Activated T-helper 1 cell treated with anti-CD3 and anti-CD28 coated beads, Interleukin-12 subunit alpha, Interleukin-12 subunit beta, Interleukin-2, Interleukin-4 antibody, amounts not matched to agents 30 ng/mL and 10 ng/mL and 1 ng/mL, durations not matched to agents 14 hours and 24 hours and 36 hours (primary cell): ENCODE measurements at regions of chr1 and their contacts with region 1.

Region 1: DNA sequence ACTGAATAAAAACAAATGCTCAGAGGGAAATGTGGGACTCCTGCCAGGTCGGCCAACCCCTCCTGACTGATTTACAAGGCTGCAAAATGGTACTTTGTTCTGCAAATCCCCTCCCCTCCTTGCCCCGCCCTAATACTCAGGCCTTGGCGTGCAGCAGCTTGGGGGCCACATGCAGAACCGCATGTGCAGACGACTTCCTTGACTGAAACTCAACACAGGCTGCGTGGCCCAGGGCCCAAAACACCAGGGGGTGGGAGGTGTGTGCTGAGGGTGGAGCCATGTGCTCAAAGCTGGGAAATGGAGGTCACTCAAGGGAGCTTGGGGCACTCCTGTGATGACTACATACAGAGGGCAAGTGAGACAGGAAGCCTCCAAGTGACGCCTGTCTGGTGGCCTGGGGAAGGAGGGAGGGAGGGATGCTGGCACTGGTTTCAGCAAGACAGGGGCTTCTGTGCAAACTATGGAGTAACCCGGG is 87.2 kb downstream of the MRPL37 start:
- DNase-seq: peak; percentile 79
- H3K4me3 Mint-ChIP-seq: peak overlapping the region; percentile 81
- H3K27ac Mint-ChIP-seq: peak overlapping the region; percentile 98
- H3K4me1 Mint-ChIP-seq: peaks cover 89% of the 10 kb centered on the region
- H3K27me3 Mint-ChIP-seq: no peaks in the 10 kb centered on the region

Region 2: GRCh38 chr1:54230507-54231339 is 56.5 kb before region 1 on chr1:
- intact Hi-C with region 1: loop called (anchors 1 kb)
- DNase-seq: no peak
- H3K4me3 Mint-ChIP-seq: no peak overlapping the region
- H3K27ac Mint-ChIP-seq: peak overlapping the region; percentile 86
- H3K4me1 Mint-ChIP-seq: peaks cover 27% of the 10 kb centered on the region
- H3K27me3 Mint-ChIP-seq: no peaks in the 10 kb centered on the region

Region 3: GRCh38 chr1:54255026-54255702 is 32.0 kb before region 1 on chr1:
- intact Hi-C with region 1: no loop called
- DNase-seq: no peak
- H3K4me3 Mint-ChIP-seq: no peak overlapping the region
- H3K27ac Mint-ChIP-seq: no peak overlapping the region
- H3K4me1 Mint-ChIP-seq: peaks cover 5% of the 10 kb centered on the region
- H3K27me3 Mint-ChIP-seq: no peaks in the 10 kb centered on the region

Region 4: DNA sequence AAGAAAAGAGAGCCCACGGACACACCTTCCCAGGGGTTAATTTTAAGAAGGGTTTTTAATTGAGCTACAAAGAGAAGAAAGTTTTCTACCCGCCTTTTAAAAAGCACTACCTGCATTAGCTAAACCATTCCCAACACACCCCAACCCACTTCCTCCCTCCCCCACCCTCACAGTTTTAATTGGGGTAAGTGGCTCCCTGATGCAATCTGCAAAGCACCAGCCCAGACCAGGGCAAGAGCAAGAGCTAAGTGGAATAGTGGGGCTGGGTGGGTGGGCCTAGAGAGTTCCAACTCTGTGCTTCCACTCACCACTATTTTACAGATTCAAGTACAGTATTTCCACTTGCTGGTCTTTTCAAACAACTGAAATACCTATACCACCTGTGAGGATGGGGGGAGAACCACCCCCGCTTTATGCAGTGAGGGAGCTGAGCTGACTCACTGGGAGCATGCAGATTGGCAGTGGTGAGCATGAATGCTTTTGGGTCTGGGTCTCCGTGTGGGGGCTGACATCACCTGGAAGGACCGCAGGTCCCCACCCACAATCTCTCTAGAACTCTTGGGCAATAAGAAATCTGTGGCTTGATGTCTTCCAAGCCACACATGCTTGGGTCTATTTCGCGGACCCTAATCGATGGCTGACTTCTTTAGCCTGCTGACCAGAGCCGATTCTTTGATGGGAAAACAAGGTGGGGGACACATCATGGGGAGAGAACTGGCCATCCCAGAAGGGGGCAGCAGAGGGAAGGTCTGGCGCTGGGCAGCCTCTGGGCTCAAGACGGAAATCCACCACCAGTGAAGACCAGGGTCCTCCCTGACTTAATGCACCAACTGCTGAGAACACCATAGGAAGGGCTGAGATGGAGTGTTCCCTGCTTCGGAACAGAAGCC is 23.5 kb after region 1 on chr1:
- intact Hi-C with region 1: loop called (anchors 1 kb)
- DNase-seq: no peak
- H3K4me3 Mint-ChIP-seq: peak overlapping the region; percentile 30
- H3K27ac Mint-ChIP-seq: peak overlapping the region; percentile 77
- H3K4me1 Mint-ChIP-seq: peaks cover 61% of the 10 kb centered on the region
- H3K27me3 Mint-ChIP-seq: no peaks in the 10 kb centered on the region

Region 5: DNA sequence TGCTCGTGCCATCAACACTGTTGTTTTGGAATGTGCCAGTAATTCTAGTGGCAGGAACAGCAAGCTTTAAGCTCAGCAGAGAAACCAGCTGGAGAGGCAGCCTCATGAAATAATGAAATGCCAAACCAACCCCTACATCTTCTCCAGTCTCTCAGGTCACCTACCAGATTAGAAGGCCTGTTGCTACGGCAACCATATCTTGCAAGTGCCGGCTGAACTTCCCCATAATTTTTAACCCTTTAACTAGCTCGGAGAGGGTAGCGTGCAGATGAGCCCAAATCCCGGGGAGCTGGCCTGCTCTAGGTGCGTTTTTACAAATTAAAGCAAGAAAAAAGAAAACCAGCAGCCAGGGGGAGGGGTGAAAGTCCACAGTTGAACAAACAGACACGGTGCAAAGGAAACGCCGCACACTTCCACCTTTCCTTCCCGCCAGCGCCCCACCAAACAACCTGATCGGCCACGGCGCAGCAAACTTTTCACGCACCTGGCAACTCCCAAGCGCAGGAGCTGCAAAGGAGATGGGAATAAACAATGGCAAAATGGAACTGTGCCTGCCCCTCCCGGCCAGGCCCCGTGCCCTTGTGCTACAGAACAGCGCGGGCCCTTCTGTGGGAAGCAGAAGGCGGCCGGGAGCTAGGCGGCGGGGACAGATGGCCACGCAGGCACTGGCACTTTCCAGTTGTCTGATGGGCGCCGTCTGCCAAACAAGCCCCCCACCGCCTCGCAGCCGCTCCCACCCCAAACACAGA is 68.9 kb after region 1 on chr1:
- intact Hi-C with region 1: loop called (anchors 1 kb)
- DNase-seq: no peak
- H3K4me3 Mint-ChIP-seq: peak overlapping the region; percentile 87
- H3K27ac Mint-ChIP-seq: peak overlapping the region; percentile 94
- H3K4me1 Mint-ChIP-seq: peaks cover 91% of the 10 kb centered on the region
- H3K27me3 Mint-ChIP-seq: no peaks in the 10 kb centered on the region

Region 6: DNA sequence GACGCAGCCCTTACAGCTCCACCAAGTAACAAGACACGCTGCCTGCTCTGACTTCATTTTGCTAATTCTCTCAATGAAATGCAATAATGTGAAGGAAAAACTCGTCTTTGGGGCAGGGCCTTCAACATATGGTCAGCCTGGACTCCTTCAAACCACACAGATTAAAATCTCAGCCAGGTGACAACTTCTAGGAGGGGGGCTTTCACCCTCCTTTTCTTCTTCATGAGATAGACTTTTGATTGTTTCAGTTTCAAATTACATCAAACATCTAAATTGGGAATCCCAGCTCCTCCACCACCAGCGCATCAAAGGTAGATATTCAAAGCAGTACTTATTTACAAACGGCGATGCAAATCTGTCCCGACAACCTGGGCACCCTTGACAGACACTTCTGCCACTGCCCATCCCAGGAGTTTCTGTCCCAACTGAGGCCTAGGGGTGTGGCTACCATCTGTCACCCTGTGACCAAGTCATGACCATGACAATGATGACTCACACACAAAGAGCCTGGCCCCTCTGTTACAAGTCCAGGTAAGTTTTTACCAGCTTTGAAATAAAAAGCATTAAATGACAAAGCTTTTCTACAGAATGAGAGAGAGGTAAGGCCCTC is 89.3 kb after region 1 on chr1:
- intact Hi-C with region 1: loop called (anchors 2 kb)
- DNase-seq: peak; percentile 7
- H3K4me3 Mint-ChIP-seq: no peak overlapping the region
- H3K27ac Mint-ChIP-seq: peak overlapping the region; percentile 67
- H3K4me1 Mint-ChIP-seq: peaks cover 77% of the 10 kb centered on the region
- H3K27me3 Mint-ChIP-seq: no peaks in the 10 kb centered on the region

Region 7: GRCh38 chr1:54400329-54400728 is 113.1 kb after region 1 on chr1:
- intact Hi-C with region 1: loop called (anchors 1 kb)
- DNase-seq: no peak
- H3K4me3 Mint-ChIP-seq: peak overlapping the region; percentile 68
- H3K27ac Mint-ChIP-seq: peak overlapping the region; percentile 88
- H3K4me1 Mint-ChIP-seq: peaks cover 88% of the 10 kb centered on the region
- H3K27me3 Mint-ChIP-seq: no peaks in the 10 kb centered on the region

Region 8: GRCh38 chr1:54800899-54801759 is 513.9 kb after region 1 on chr1 and contains the start of gene TTC22:
- intact Hi-C with region 1: loop called (anchors 5 kb)
- DNase-seq: peak; percentile 56
- H3K4me3 Mint-ChIP-seq: peak within 1 kb of the TSS; percentile 85
- H3K27ac Mint-ChIP-seq: peak within 1 kb of the TSS; percentile 80
- H3K4me1 Mint-ChIP-seq: peaks cover 65% of the 10 kb centered on the region
- H3K27me3 Mint-ChIP-seq: no peaks in the 10 kb centered on the region
- total RNA-seq, gene TTC22: 2.2 and 2.3 TPM in 2 replicates